Gastrocnemius medialis (tissue), 4 donors: ENCODE measurements at regions of chr2 and their contacts with region 1.

Region 1: GRCh38 chr2:64228126-64228678 is 84.0 kb upstream of the PELI1 start:
- DNase-seq: peak; percentile 50 to 61
- ATAC-seq: peak; percentile 90 to 95
- H3K4me3 ChIP-seq: peak overlapping the region; percentile 53 to 62 (median 56)
- H3K27ac ChIP-seq: peak overlapping the region; percentile 51 to 71 (median 60)
- H3K4me1 ChIP-seq: peaks cover 4 to 10% of the 10 kb centered on the region in 2 donors
- H3K27me3 ChIP-seq: no peaks in the 10 kb centered on the region
- CTCF ChIP-seq: no peak
- POLR2A ChIP-seq: peak; percentile 36 to 48

Region 2: DNA sequence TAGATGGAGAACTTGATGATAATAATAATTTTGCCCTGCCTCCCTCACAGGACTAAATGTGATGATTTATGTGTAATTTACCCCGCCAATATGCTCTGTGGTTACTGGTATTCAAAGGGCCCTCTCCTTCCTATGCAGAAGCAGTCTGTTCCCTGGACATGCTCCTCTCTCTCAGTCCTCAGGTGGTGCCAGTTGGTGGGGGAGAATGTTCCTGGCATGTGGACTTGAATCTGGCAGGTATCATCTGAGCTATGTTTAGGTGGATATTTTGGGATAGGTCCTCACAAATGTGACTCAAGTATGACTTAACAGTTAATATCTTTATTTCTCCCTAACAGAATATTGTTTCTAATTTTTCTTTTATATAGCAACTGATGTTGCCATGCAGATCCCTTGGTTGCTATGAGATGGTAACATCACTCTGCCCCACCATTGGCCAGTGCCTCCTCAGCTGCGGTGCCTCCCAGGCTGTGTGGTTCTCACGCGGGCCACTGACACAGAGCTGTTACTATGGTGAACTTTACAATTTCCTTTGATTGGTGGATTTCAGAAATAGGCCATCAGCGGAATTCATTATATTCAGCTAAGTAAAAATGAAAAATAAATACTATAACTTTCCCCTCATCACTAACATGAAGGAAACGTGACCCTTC is 22.7 kb after region 1 on chr2:
- in situ Hi-C with region 1: no loop called
- intact Hi-C with region 1: no loop called
- DNase-seq: no peak
- ATAC-seq: no peak
- H3K4me3 ChIP-seq: no peak overlapping the region
- H3K27ac ChIP-seq: no peak overlapping the region
- H3K4me1 ChIP-seq: no peaks in the 10 kb centered on the region
- H3K27me3 ChIP-seq: no peaks in the 10 kb centered on the region
- CTCF ChIP-seq: no peak
- POLR2A ChIP-seq: no peak

Region 3: GRCh38 chr2:64273524-64274398 is 45.6 kb after region 1 on chr2:
- in situ Hi-C with region 1: no loop called
- intact Hi-C with region 1: loop called (anchors 10 kb)
- DNase-seq: peak; percentile 46 to 59
- ATAC-seq: peak; percentile 85 to 90
- H3K4me3 ChIP-seq: no peak overlapping the region
- H3K27ac ChIP-seq: peak overlapping the region; percentile 72 to 81 (median 78)
- H3K4me1 ChIP-seq: peaks cover 11 to 19% of the 10 kb centered on the region in 2 donors
- H3K27me3 ChIP-seq: no peaks in the 10 kb centered on the region
- CTCF ChIP-seq: no peak
- POLR2A ChIP-seq: no peak